GM10248 (cell line): ENCODE measurements at regions of chr16 and their contacts with region 1.

Region 1: DNA sequence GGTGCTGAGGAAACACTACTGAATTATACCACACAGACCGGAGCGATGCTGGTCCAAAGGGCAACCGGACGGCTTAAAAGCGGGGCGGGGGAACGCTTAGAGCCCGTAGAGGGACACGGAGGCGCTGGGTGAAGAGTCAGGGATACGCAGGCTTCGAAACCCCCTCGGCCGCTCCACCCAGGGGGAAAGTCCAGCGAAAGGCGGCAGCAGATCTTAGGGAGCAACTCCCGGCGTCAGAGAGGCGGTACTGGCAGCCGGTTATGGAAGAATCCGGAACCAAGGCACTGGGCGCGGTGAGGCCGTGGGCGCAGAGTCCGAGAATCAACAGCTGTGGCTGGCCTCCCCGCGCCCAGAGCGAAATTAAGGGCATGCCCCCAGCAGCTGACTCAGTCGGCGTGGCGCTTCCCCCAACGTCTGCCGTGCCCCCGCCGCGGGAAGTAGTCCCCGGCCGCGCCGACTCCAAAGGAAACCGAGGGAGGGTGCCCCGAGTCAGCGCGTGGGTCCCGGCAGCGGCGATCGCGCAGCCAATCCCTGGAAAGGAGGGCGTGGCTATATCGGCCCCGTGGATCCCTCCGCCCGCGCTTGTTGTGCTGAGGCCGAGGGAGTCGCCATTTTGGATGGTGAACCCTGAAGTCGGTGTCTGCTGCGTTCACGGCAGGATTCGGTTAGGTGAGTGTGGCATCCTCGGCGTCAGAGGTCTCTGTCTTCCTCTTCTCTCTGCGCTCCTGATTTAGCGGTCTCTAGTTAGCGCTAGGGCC is at the start of gene IST1:
- DNase-seq: peak; percentile 97
- CTCF ChIP-seq: no peak

Region 2: DNA sequence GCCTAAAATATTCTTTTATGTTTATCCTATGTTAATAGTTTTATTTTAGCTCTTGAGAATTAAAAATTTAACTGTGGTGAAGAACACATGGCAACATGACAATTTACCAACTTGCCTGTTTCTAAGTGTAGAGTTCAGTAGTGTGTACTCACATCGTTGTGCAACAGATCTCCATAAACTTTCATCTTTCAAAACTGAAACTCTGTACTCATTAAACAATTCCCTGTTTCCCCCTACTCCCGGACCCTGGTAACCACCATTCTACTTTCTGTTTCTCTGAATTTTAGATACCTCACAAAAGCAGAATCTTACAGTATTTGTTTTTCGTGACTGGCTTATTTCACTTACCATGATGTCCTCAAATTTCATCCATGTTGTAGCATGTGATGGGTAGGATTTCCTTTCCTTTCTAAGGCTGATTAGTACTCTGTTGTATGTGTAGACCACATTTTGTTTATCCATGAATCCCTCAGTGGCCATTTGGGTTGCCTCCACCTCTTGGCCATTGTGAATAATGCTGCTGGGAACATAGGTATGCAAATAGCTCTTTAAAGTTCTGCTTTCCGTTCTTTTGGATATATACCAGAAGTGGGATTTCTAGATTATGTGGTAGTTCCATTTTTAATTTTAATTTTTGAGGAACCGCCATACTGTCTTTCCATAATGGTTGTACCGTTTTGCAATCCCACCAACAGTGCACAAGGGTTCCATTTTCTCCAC is 17.6 kb after region 1 on chr16:
- CTCF ChIA-PET with region 1: interaction called, 14 read pairs
- POLR2A ChIA-PET with region 1: interaction called, 22 read pairs
- DNase-seq: no peak
- CTCF ChIP-seq: no peak

Region 3: GRCh38 chr16:71919035-71919434 is 23.9 kb after region 1 on chr16:
- CTCF ChIA-PET with region 1: interaction called, 7 read pairs
- POLR2A ChIA-PET with region 1: interaction called, 12 read pairs
- DNase-seq: peak; percentile 55
- CTCF ChIP-seq: no peak